ENCODE measurements at regions of chr22 and their contacts with region 1.

Region 1: GRCh38 chr22:29780748-29781676 is 13.8 kb downstream of the UQCR10 start:
- DNase-seq: peak; percentile 60
- H3K4me3 ChIP-seq: no peak overlapping the region
- H3K27ac ChIP-seq: no peak overlapping the region
- H3K4me1 ChIP-seq: peaks cover 9% of the 10 kb centered on the region
- H3K27me3 ChIP-seq: no peaks in the 10 kb centered on the region
- CTCF ChIP-seq: no peak

Region 2: GRCh38 chr22:29625090-29625825 is 155.8 kb before region 1 on chr22:
- CTCF ChIA-PET with region 1: no interaction called
- POLR2A ChIA-PET with region 1: no interaction called
- intact Hi-C with region 1: no loop called
- DNase-seq: peak; percentile 76
- H3K4me3 ChIP-seq: no peak overlapping the region
- H3K27ac ChIP-seq: no peak overlapping the region
- H3K4me1 ChIP-seq: peaks cover 20% of the 10 kb centered on the region
- H3K27me3 ChIP-seq: no peaks in the 10 kb centered on the region
- CTCF ChIP-seq: peak; percentile 94

Region 3: DNA sequence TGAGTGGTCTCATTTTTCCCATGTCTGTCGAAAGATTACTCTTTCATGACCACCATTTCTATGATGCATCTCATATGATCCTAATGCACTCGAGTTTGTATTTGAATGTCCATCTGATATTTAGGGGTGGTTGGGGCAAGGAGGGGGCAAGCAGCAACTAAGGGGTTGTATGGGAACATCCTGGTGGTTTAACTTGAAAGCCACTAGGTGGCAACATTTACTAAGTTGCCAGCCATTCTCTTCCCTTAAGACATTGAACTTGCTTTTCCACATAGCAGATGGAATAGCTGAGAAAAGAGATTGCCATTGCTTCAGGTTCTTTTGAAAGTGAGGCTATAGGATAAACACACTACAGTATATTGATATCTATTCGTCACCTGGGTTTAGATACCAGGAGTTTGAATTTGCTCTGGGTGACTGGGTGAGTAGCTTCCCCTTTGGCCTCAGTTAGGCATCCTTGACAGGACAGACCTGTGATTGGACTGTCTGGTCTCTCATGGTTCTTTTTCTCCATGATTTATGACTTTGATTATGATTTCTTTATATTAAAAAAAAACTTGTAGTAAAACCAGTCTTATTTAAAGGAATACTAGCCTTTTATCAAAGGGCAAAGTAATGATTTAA is 145.2 kb before region 1 on chr22:
- CTCF ChIA-PET with region 1: no interaction called
- POLR2A ChIA-PET with region 1: no interaction called
- intact Hi-C with region 1: loop called (anchors 5 kb)
- DNase-seq: peak; percentile 76
- H3K4me3 ChIP-seq: no peak overlapping the region
- H3K27ac ChIP-seq: no peak overlapping the region
- H3K4me1 ChIP-seq: peaks cover 17% of the 10 kb centered on the region
- H3K27me3 ChIP-seq: peaks cover 9% of the 10 kb centered on the region
- CTCF ChIP-seq: peak; percentile 78